Heart right ventricle (tissue), 16 donors: ENCODE measurements at regions of chr3 and their contacts with region 1.

Region 1: GRCh38 chr3:89474402-89475096 is 367.1 kb downstream of the EPHA3 start:
- DNase-seq: no peak
- ATAC-seq: no peak
- H3K4me3 ChIP-seq: no peak overlapping the region
- H3K27ac ChIP-seq: no peak overlapping the region
- H3K4me1 ChIP-seq: no peaks in the 10 kb centered on the region
- H3K27me3 ChIP-seq: no peaks in the 10 kb centered on the region
- CTCF ChIP-seq: no peak

Region 2: DNA sequence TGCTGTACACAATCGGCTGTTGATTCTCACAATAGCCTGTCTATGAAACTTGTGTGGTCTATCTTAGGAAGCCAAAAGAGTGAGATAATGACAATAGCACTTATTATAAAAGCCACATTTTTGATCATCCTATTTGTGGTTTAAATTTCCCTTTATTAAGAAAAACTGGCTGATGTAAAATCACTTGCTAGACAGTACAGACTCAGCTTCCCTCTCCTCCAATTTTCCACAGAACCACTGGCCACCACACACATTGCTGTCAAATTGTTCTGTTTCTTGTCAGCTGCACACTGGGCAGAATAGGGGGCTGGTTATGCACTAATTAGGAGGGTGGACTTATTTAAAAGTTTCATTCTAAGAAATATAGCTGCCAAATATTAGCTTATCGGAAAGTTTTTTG is 58.7 kb after region 1 on chr3:
- intact Hi-C with region 1: loop called in 1 of 10 experiments (anchors 10 kb)
- DNase-seq: no peak
- ATAC-seq: peak in 1 of 8 donors; percentile 42
- H3K4me3 ChIP-seq: no peak overlapping the region
- H3K27ac ChIP-seq: peak overlapping the region in 1 of 10 donors; percentile 11
- H3K4me1 ChIP-seq: no peaks in the 10 kb centered on the region
- H3K27me3 ChIP-seq: no peaks in the 10 kb centered on the region
- CTCF ChIP-seq: no peak

Region 3: GRCh38 chr3:89560546-89560945 is 86.0 kb after region 1 on chr3:
- intact Hi-C with region 1: no loop called
- DNase-seq: no peak
- ATAC-seq: no peak
- H3K4me3 ChIP-seq: no peak overlapping the region
- H3K27ac ChIP-seq: no peak overlapping the region
- H3K4me1 ChIP-seq: no peaks in the 10 kb centered on the region
- H3K27me3 ChIP-seq: no peaks in the 10 kb centered on the region
- CTCF ChIP-seq: no peak